AG04450 (cell line): ENCODE measurements at regions of chr1 and their contacts with region 1.

Region 1: GRCh38 chr1:39538588-39539465 is 37.8 kb downstream of the PABPC4 start:
- DNase-seq: peak; percentile 33
- H3K4me3 ChIP-seq: no peak overlapping the region
- H3K27ac ChIP-seq: no peak overlapping the region
- H3K27me3 ChIP-seq: no peaks in the 10 kb centered on the region
- CTCF ChIP-seq: peak; percentile 96

Region 2: DNA sequence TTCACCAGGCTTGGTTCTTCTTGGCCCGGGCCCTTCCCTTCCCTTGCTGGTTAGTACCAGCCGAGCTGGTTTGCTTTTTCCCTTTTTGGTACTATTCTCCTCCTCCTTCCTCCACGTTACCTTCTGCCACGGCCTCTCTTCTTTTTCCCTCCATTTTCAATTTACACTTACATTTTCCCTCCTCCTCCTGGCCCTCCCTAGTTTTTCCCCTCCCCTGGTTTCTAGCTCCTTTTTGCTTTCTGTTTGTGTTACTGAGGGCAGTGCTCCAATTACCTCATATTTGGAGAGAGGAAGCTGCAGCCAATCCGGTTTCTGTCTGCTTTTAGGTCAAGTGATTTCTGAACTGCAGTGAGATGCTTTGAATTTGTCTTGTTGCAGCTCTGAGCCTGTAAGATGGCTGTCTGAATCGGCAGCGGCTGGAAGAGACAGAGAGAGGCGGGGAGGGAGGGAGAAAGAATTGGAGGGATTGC is 270.7 kb before region 1 on chr1:
- CTCF ChIA-PET with region 1: no interaction called
- POLR2A ChIA-PET with region 1: no interaction called
- DNase-seq: peak; percentile 70
- H3K4me3 ChIP-seq: peak overlapping the region; percentile 51
- H3K27ac ChIP-seq: peak overlapping the region; percentile 75
- H3K27me3 ChIP-seq: no peaks in the 10 kb centered on the region
- CTCF ChIP-seq: no peak

Region 3: GRCh38 chr1:39305555-39305954 is 233.3 kb before region 1 on chr1:
- CTCF ChIA-PET with region 1: interaction called, 10 read pairs
- POLR2A ChIA-PET with region 1: no interaction called
- DNase-seq: no peak
- H3K4me3 ChIP-seq: no peak overlapping the region
- H3K27ac ChIP-seq: no peak overlapping the region
- H3K27me3 ChIP-seq: no peaks in the 10 kb centered on the region
- CTCF ChIP-seq: no peak

Region 4: GRCh38 chr1:39391691-39392679 is 146.8 kb before region 1 on chr1:
- CTCF ChIA-PET with region 1: interaction called, 10 read pairs
- POLR2A ChIA-PET with region 1: no interaction called
- DNase-seq: no peak
- H3K4me3 ChIP-seq: no peak overlapping the region
- H3K27ac ChIP-seq: peak overlapping the region; percentile 73
- H3K27me3 ChIP-seq: no peaks in the 10 kb centered on the region
- CTCF ChIP-seq: no peak

Region 5: GRCh38 chr1:39431927-39432326 is 106.9 kb before region 1 on chr1:
- CTCF ChIA-PET with region 1: interaction called, 11 read pairs
- POLR2A ChIA-PET with region 1: no interaction called
- DNase-seq: no peak
- H3K4me3 ChIP-seq: no peak overlapping the region
- H3K27ac ChIP-seq: peak overlapping the region; percentile 52
- H3K27me3 ChIP-seq: no peaks in the 10 kb centered on the region
- CTCF ChIP-seq: no peak

Region 6: GRCh38 chr1:39554277-39554676 is 15.4 kb after region 1 on chr1:
- CTCF ChIA-PET with region 1: interaction called, 11 read pairs
- POLR2A ChIA-PET with region 1: interaction called, 3 read pairs
- DNase-seq: no peak
- H3K4me3 ChIP-seq: no peak overlapping the region
- H3K27ac ChIP-seq: no peak overlapping the region
- H3K27me3 ChIP-seq: no peaks in the 10 kb centered on the region
- CTCF ChIP-seq: no peak